ENCODE measurements at regions of chr15 and their contacts with region 1.

Region 1: DNA sequence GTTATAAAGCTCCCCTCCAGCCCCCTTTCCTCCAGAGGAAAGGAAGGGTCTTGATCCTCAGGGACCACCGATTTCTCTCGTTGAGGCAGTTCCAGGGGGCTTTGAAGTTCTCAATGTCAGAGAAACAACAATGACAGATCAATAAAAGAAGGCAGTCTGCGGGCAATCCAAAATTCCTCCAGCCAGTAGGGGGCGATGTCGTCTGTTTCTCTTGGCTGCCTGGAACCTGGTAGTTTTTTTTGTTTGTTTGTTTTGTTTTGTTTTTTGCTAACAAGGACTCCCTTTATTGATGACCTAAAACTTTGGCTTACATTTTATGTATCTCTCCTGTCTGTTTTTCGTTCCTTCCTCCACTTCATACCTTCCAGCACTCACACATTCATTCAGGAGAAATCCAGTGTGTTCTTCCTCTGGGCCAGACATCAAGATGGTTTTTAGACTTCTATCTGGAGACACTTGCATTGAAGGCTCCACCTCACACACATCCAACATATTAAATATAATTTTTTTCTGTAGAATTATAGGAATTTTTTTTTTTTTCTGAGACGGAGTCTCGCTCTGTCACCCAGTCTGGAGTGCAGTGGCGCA is 276.6 kb downstream of the RPLP1 start:
- DNase-seq: peak; percentile 76
- ATAC-seq: peak; percentile 57
- H3K4me3 ChIP-seq: no peak overlapping the region
- H3K4me3 Mint-ChIP-seq: no peak overlapping the region
- H3K27ac ChIP-seq: no peak overlapping the region
- H3K27ac Mint-ChIP-seq: peak overlapping the region; percentile 10
- H3K4me1 ChIP-seq: peaks cover 6 to 20% of the 10 kb centered on the region in 2 donors
- H3K4me1 Mint-ChIP-seq: peaks cover 26% of the 10 kb centered on the region
- H3K27me3 ChIP-seq: peaks cover 0 to 10% (median 1%) of the 10 kb centered on the region in 4 experiments
- H3K27me3 Mint-ChIP-seq: peaks cover 6% of the 10 kb centered on the region
- CTCF ChIP-seq: peak; percentile 92

Region 2: GRCh38 chr15:69743091-69743490 is 13.8 kb after region 1 on chr15:
- CTCF ChIA-PET with region 1: interaction called, 19 read pairs
- POLR2A ChIA-PET with region 1: no interaction called
- intact Hi-C with region 1: no loop called
- DNase-seq: no peak
- ATAC-seq: no peak
- H3K4me3 ChIP-seq: no peak overlapping the region
- H3K4me3 Mint-ChIP-seq: no peak overlapping the region
- H3K27ac ChIP-seq: no peak overlapping the region
- H3K27ac Mint-ChIP-seq: no peak overlapping the region
- H3K4me1 ChIP-seq: peaks cover 9 to 14% of the 10 kb centered on the region in 2 donors
- H3K4me1 Mint-ChIP-seq: peaks cover 16% of the 10 kb centered on the region
- H3K27me3 ChIP-seq: peaks cover 0 to 11% (median 3%) of the 10 kb centered on the region in 4 experiments
- H3K27me3 Mint-ChIP-seq: peaks cover 31% of the 10 kb centered on the region
- CTCF ChIP-seq: no peak

Region 3: GRCh38 chr15:69760890-69761568 is 31.8 kb after region 1 on chr15:
- CTCF ChIA-PET with region 1: no interaction called
- POLR2A ChIA-PET with region 1: no interaction called
- intact Hi-C with region 1: loop called (anchors 5 kb)
- DNase-seq: peak; percentile 63
- ATAC-seq: peak; percentile 80
- H3K4me3 ChIP-seq: no peak overlapping the region
- H3K4me3 Mint-ChIP-seq: peak overlapping the region; percentile 76
- H3K27ac ChIP-seq: no peak overlapping the region
- H3K27ac Mint-ChIP-seq: peak overlapping the region; percentile 81
- H3K4me1 ChIP-seq: peaks cover 65 to 68% of the 10 kb centered on the region in 2 donors
- H3K4me1 Mint-ChIP-seq: peaks cover 69% of the 10 kb centered on the region
- H3K27me3 ChIP-seq: no peaks in the 10 kb centered on the region
- H3K27me3 Mint-ChIP-seq: peaks cover 3% of the 10 kb centered on the region
- CTCF ChIP-seq: no peak

Region 4: DNA sequence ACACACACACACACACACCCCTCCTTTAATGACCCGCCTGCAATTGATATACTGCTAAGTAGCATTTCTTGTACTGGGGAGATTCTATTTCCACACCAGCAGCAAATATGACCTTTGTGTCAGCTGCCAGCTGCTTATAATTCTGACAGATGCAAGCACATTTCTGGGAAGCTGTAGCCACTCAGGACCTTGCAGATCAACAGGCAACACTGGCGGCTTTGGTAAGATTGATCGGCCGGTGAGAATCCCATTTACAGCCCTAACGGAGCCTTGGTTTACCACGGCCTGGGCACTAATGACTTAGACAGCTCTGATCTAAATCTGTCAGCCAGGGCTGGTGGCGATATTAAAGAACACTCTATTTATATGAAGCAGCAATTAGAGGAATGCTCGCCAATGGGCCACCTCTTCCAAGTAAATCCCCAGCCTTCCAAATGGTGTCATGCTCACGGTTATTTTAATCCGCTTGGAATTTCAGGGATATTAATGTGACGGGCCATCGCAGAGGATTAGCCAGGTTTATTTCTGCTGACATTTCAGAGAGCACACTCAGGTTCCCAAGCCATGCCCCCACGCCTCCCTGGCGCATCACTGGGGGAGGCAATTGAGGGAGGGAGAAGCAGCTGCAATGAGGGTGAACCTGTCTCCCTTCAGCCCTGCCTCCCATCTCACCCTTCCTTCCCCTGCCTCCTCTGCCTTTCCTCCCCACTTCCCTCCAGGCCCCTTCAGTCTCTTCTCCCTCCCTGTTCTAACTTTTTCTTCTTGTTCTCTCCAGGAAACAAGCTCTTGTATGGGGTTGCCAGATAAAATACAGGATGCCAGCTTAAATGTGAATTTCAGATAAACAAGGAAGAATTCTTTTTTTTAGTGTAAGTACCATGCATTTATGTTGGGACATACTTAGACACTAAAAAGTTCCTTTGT is 81.4 kb after region 1 on chr15:
- CTCF ChIA-PET with region 1: interaction called, 3 read pairs
- POLR2A ChIA-PET with region 1: no interaction called
- intact Hi-C with region 1: loop called (anchors 10 kb)
- DNase-seq: no peak
- ATAC-seq: no peak
- H3K4me3 ChIP-seq: no peak overlapping the region
- H3K4me3 Mint-ChIP-seq: no peak overlapping the region
- H3K27ac ChIP-seq: no peak overlapping the region
- H3K27ac Mint-ChIP-seq: no peak overlapping the region
- H3K4me1 ChIP-seq: peaks cover 6 to 10% of the 10 kb centered on the region in 2 donors
- H3K4me1 Mint-ChIP-seq: peaks cover 10% of the 10 kb centered on the region
- H3K27me3 ChIP-seq: peaks cover 0 to 21% (median 4%) of the 10 kb centered on the region in 4 experiments
- H3K27me3 Mint-ChIP-seq: peaks cover 28% of the 10 kb centered on the region
- CTCF ChIP-seq: no peak

Region 5: GRCh38 chr15:70071799-70072198 is 342.5 kb after region 1 on chr15:
- CTCF ChIA-PET with region 1: interaction called, 5 read pairs
- POLR2A ChIA-PET with region 1: no interaction called
- intact Hi-C with region 1: loop called (anchors 1 kb)
- DNase-seq: peak; percentile 39
- ATAC-seq: no peak
- H3K4me3 ChIP-seq: no peak overlapping the region
- H3K4me3 Mint-ChIP-seq: peak overlapping the region; percentile 16
- H3K27ac ChIP-seq: peak overlapping the region in 1 of 2 donors; percentile 31
- H3K27ac Mint-ChIP-seq: peak overlapping the region; percentile 71
- H3K4me1 ChIP-seq: peaks cover 15 to 30% of the 10 kb centered on the region in 2 donors
- H3K4me1 Mint-ChIP-seq: peaks cover 55% of the 10 kb centered on the region
- H3K27me3 ChIP-seq: no peaks in the 10 kb centered on the region
- H3K27me3 Mint-ChIP-seq: no peaks in the 10 kb centered on the region
- CTCF ChIP-seq: no peak

Region 6: DNA sequence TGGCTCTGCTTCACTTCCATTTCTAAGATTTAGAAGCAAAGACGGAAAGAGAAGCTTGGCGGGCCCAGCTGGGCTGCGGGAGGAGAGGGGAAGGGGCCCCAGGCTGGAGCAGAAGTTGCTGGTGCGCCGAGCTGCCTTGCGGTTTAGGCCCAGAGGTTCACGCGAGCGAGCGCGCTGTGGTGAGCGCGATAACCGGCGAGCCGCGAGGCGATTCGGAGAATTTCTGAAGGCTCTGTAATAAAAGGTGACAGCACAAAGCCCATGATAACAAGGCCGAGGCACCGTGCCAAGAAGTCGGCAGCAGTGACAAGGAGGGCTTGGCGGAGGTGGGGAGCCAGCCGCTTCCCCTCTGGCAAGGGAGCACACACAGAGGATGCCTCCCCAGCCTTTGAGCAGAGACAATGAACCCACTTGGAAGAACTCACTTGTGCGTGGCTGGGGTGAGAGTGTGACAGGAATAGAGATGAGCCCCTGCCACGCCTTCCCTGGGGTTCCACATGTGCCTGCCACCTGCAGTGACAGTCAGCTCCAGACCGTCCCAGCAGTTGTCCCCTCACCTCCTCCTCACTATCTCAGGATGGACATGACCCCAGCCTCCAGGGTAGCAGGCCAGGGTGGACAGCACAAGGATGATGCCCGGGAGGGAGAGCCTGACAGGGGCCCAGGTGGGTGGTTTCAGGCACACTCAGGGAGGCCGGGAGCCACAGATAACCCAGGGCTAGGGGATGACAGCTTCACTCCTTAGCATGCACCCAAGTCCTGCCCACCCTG is 718.9 kb after region 1 on chr15:
- CTCF ChIA-PET with region 1: no interaction called
- POLR2A ChIA-PET with region 1: no interaction called
- intact Hi-C with region 1: no loop called
- DNase-seq: peak; percentile 70
- ATAC-seq: peak; percentile 73
- H3K4me3 ChIP-seq: peak overlapping the region in 2 of 5 experiments; percentile 17 to 24
- H3K4me3 Mint-ChIP-seq: peak overlapping the region; percentile 62
- H3K27ac ChIP-seq: no peak overlapping the region
- H3K27ac Mint-ChIP-seq: peak overlapping the region; percentile 37
- H3K4me1 ChIP-seq: peaks cover 21 to 30% of the 10 kb centered on the region in 2 donors
- H3K4me1 Mint-ChIP-seq: peaks cover 29% of the 10 kb centered on the region
- H3K27me3 ChIP-seq: peaks cover 0 to 12% (median under 1%) of the 10 kb centered on the region in 4 experiments
- H3K27me3 Mint-ChIP-seq: peaks cover 27% of the 10 kb centered on the region
- CTCF ChIP-seq: no peak

Measured in B cell (primary cell).